ENCODE measurements at regions of chr2 and their contacts with region 1.

Region 1: DNA sequence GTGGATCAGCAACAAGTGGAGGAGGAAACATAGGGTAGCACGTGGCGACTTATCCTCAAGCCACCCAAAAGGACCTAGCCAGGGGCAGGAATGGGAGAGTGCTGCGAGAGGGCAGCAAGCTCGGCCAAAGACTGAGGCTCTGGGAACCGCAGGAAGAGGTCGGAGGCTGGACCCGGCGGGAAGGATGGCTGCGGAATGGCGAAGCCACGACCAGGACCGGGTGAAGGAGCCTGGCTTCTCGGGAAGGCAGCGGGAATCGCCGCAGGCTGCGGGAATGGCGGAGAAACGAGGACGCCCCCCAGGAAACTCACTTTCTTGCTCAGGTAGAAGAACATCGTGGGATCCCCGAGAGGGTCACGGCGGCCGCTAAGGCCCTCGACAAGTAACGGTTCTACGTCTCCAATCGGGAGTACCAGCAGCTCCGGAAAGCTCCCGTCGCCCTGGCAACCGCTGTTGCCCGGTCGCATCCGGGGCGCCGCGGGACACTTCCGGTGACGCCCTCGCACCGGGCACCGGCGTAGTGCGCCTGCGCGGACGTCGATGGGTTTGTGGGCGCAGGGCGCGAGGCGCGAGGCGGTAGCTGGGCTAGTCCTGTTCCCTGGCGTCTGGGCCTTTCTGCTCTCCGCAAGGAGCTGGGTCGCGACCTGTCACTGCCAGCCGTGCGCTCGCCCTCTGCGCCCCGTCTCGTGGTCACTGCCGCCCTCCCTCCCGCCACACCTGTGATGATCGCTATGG is at the start of gene WDR35:
- DNase-seq: peak; percentile 64 to 93 (median 80)
- ATAC-seq: peak; percentile 86 to 96 (median 96)
- H3K4me3 ChIP-seq: peak within 1 kb of the TSS; percentile 83 to 97
- H3K4me3 Mint-ChIP-seq: peak within 1 kb of the TSS; percentile 86 to 92 (median 90)
- H3K27ac ChIP-seq: peak within 1 kb of the TSS; percentile 64
- H3K27ac Mint-ChIP-seq: peak within 1 kb of the TSS; percentile 82 to 83
- H3K4me1 ChIP-seq: peaks cover 9 to 16% of the 10 kb centered on the region in 2 experiments
- H3K4me1 Mint-ChIP-seq: peaks cover 20 to 31% (median 22%) of the 10 kb centered on the region in 3 donors
- H3K27me3 ChIP-seq: no peaks in the 10 kb centered on the region
- H3K27me3 Mint-ChIP-seq: peaks cover 11 to 15% of the 10 kb centered on the region in 2 donors
- total RNA-seq, gene WDR35: 3.7 to 5.7 (median 4.9) TPM

Region 2: DNA sequence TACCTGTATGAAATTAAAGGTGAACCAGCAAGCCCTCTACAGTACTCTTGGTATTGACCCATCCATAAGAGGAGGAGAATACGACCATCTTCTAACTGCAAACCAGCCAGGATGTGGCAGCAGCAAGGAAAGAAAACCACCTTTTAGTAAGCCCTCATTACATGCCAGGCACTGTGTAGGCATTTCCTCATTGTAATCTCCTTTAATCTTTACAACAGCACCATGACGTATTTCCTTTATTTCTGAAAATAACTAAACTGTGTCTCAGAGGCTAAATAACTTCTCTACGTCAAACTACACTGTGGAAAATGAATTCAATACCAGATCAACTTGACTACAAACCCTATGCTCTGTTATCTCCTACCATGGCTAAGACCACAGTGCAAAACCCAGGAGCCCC is 18.2 kb before region 1 on chr2:
- CTCF ChIA-PET with region 1: interaction called in 1 of 2 experiments, 5 read pairs
- POLR2A ChIA-PET with region 1: interaction called, 3 to 11 read pairs
- DNase-seq: peak in 13 of 35 experiments; percentile 0 to 43 (median 12)
- ATAC-seq: peak; percentile 27 to 95 (median 59)
- H3K4me3 ChIP-seq: no peak overlapping the region
- H3K4me3 Mint-ChIP-seq: no peak overlapping the region
- H3K27ac ChIP-seq: no peak overlapping the region
- H3K27ac Mint-ChIP-seq: peak overlapping the region; percentile 53 to 61
- H3K4me1 ChIP-seq: peaks cover 0 to 2% of the 10 kb centered on the region in 2 experiments
- H3K4me1 Mint-ChIP-seq: peaks cover 10% of the 10 kb centered on the region in 3 donors
- H3K27me3 ChIP-seq: no peaks in the 10 kb centered on the region
- H3K27me3 Mint-ChIP-seq: no peaks in the 10 kb centered on the region

Region 3: DNA sequence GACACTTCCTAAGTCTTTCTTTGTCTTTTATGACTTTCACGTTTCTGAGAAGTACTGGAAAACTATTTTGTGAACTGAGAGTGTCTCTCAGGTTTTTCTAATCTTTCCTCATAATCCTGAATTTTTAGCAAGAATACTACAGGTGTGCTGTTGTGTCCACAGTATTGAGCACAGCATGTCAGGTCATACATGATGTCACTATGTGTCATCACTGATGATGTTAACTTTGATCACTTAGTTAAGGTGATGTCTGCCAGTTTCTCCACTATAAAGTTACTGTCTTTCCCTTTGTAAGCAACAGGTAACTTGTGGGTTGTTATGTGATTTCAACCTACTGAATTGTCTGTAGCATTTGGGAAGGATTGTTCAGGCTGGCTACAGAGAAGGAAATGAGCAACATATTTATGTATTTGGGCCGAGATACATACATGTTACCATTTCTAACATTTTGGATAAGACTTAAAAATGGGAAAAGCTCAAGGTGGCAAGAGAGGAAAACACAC is 11.6 kb after region 1 on chr2:
- CTCF ChIA-PET with region 1: no interaction called
- POLR2A ChIA-PET with region 1: no interaction called
- DNase-seq: no peak
- ATAC-seq: no peak
- H3K4me3 ChIP-seq: no peak overlapping the region
- H3K4me3 Mint-ChIP-seq: no peak overlapping the region
- H3K27ac ChIP-seq: no peak overlapping the region
- H3K27ac Mint-ChIP-seq: no peak overlapping the region
- H3K4me1 ChIP-seq: no peaks in the 10 kb centered on the region
- H3K4me1 Mint-ChIP-seq: no peaks in the 10 kb centered on the region
- H3K27me3 ChIP-seq: peaks cover 0 to 10% of the 10 kb centered on the region in 2 experiments
- H3K27me3 Mint-ChIP-seq: peaks cover 29 to 36% of the 10 kb centered on the region in 2 donors